Spleen (tissue), 13 donors: ENCODE measurements at regions of chr6 and their contacts with region 1.

Region 1: DNA sequence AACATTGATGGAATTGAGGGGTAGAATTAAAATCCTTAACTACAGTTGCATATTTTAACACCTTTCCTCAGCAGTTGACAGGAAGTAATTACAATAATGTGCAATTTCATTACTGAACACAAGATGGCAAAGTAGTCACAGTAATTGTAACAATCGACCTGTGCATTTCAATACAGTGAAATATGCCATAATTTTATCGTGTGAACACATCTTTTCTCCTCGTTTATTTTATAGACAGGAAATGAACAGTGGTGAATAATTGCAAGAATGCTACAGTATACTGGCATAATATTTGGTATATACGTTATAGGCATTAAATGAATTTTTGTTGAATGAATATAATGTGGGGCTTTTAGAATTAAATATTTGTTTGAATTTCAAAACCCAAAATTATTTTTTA is 25.0 kb downstream of the CYB5R4 start:
- DNase-seq: no peak
- H3K4me3 ChIP-seq: no peak overlapping the region
- H3K27ac ChIP-seq: no peak overlapping the region
- H3K4me1 ChIP-seq: peaks cover 0 to 38% (median 5%) of the 10 kb centered on the region in 6 donors
- H3K27me3 ChIP-seq: no peaks in the 10 kb centered on the region
- CTCF ChIP-seq: peak; percentile 36 to 80 (median 65)
- POLR2A ChIP-seq: no peak

Region 2: DNA sequence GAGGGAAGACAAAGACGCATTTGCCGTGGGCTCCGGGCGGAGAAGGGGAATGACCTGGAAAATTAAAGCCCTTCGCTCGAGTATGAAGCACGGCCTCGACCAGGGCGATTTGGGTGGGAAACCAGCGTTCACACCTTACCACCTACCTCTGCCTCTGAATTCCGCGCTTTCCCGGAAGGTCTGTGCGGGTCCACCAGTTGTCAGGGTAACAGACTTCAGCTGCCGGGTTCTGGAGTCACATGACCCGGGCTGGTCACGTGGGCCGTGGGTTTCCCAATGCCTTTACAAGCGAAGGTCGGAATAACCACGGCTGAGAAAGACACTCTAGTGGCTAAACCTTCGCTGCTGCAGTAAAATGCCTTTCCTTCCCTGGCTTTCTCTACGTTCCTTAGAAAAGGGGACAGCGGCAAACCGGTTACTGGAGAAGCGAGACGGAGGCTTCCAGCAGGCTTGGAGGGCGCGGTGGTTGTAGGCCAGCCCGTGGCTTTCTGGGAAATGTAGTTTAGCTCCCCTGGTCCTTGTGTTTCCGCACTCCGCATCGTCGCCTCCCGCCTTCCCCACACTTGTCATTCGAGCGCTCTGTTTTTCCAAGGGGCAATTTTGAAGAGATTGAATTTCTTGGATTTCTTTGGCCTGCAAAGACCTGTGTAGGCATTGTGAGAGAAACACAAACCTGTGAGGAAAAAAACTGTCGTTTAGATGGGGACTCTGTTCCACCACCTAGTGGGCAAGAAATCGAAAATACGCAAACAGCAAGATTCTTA is 343.1 kb after region 1 on chr6 and contains the start of gene CEP162:
- intact Hi-C with region 1: loop called (anchors 10 kb)
- DNase-seq: peak; percentile 98
- H3K4me3 ChIP-seq: peak within 1 kb of the TSS; percentile 72 to 94 (median 82)
- H3K27ac ChIP-seq: peak within 1 kb of the TSS; percentile 67 to 91 (median 84)
- H3K4me1 ChIP-seq: peaks cover 0 to 33% (median 18%) of the 10 kb centered on the region in 6 donors
- H3K27me3 ChIP-seq: peaks cover 0 to 15% (median 0%) of the 10 kb centered on the region in 7 donors
- CTCF ChIP-seq: peak; percentile 40 to 80 (median 66)
- POLR2A ChIP-seq: no peak
- total RNA-seq, gene CEP162: 6.5 to 22.8 (median 13.2) TPM

Region 3: DNA sequence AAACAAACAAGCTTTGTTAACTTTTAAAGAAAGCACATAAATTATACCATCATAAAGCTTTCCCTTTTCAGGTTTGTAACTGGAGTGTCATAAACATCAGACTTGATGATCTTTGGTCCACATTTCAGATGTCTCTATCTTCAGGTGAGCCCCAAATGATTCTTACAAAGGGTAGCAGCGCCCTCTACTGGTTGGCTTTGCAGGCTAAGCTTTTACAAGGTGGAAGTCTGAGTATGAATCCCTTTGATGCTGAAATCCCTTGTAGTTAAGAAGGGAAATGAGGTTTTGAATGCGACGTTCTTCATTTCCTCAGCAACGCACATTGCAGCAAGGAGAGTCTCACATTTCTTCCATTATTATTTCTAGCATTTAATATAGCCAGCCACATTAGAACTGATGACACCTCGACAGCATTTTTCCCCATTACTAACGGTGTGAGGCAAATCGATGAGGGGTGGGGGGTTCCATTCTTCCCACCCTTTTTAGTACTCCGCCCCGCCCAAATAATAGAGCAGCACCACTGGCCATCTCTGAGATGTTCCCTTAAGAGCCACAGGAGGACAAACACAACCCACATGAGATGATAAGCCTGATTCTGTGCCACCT is 1439.0 kb after region 1 on chr6:
- intact Hi-C with region 1: loop called (anchors 10 kb)
- DNase-seq: no peak
- H3K4me3 ChIP-seq: no peak overlapping the region
- H3K27ac ChIP-seq: no peak overlapping the region
- H3K4me1 ChIP-seq: no peaks in the 10 kb centered on the region
- H3K27me3 ChIP-seq: peaks cover 0 to 7% (median 0%) of the 10 kb centered on the region in 7 donors
- CTCF ChIP-seq: peak; percentile 11 to 76 (median 57)
- POLR2A ChIP-seq: no peak